ENCODE measurements at regions of chr2 and their contacts with region 1.

Region 1: GRCh38 chr2:10072656-10073480 is 7.3 kb downstream of the CYS1 start:
- DNase-seq: peak; percentile 59 to 89 (median 80)
- ATAC-seq: peak; percentile 97
- H3K4me3 ChIP-seq: no peak overlapping the region
- H3K4me3 Mint-ChIP-seq: no peak overlapping the region
- H3K27ac ChIP-seq: no peak overlapping the region
- H3K27ac Mint-ChIP-seq: no peak overlapping the region
- H3K4me1 ChIP-seq: no peaks in the 10 kb centered on the region
- H3K4me1 Mint-ChIP-seq: peaks cover 4% of the 10 kb centered on the region
- H3K27me3 ChIP-seq: peaks cover 4 to 11% of the 10 kb centered on the region in 2 experiments
- H3K27me3 Mint-ChIP-seq: peaks cover 35% of the 10 kb centered on the region
- CTCF ChIP-seq: peak; percentile 70

Region 2: GRCh38 chr2:10091182-10091888 is 18.5 kb after region 1 on chr2:
- CTCF ChIA-PET with region 1: interaction called, 89 read pairs
- POLR2A ChIA-PET with region 1: no interaction called
- intact Hi-C with region 1: no loop called
- DNase-seq: peak in 3 of 9 experiments; percentile 35 to 52 (median 36)
- ATAC-seq: peak; percentile 23
- H3K4me3 ChIP-seq: peak overlapping the region in 1 of 2 experiments; percentile 45
- H3K4me3 Mint-ChIP-seq: peak overlapping the region; percentile 73
- H3K27ac ChIP-seq: no peak overlapping the region
- H3K27ac Mint-ChIP-seq: no peak overlapping the region
- H3K4me1 ChIP-seq: peaks cover 3% of the 10 kb centered on the region
- H3K4me1 Mint-ChIP-seq: peaks cover 5% of the 10 kb centered on the region
- H3K27me3 ChIP-seq: peaks cover 7 to 18% of the 10 kb centered on the region in 2 experiments
- H3K27me3 Mint-ChIP-seq: peaks cover 71% of the 10 kb centered on the region
- CTCF ChIP-seq: no peak

Region 3: GRCh38 chr2:10103179-10103732 is 30.4 kb after region 1 on chr2:
- CTCF ChIA-PET with region 1: interaction called, 89 read pairs
- POLR2A ChIA-PET with region 1: no interaction called
- intact Hi-C with region 1: no loop called
- DNase-seq: no peak
- ATAC-seq: no peak
- H3K4me3 ChIP-seq: no peak overlapping the region
- H3K4me3 Mint-ChIP-seq: no peak overlapping the region
- H3K27ac ChIP-seq: no peak overlapping the region
- H3K27ac Mint-ChIP-seq: no peak overlapping the region
- H3K4me1 ChIP-seq: no peaks in the 10 kb centered on the region
- H3K4me1 Mint-ChIP-seq: no peaks in the 10 kb centered on the region
- H3K27me3 ChIP-seq: no peaks in the 10 kb centered on the region
- H3K27me3 Mint-ChIP-seq: no peaks in the 10 kb centered on the region
- CTCF ChIP-seq: no peak

Region 4: DNA sequence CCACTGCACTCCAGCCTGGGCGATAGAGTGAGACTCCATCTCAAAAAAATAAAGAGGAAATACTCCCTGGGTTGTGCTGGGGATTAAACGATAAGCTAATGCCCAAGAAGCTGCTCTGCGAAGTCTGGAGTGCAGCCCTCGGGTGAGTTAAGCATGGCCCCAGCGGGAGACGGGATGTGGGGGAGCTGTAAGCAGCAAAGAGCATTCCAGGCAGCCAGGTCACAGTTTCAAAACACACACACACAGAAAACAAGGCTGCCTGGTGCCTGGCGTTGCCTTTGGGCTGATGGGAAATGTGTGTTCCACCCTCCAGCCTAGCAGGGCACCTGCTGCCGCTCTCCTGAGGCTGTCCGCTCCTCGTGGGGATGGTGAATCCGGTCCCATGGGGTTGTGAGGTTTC is 351.2 kb after region 1 on chr2:
- CTCF ChIA-PET with region 1: interaction called, 10 read pairs
- POLR2A ChIA-PET with region 1: no interaction called
- intact Hi-C with region 1: no loop called
- DNase-seq: no peak
- ATAC-seq: no peak
- H3K4me3 ChIP-seq: no peak overlapping the region
- H3K4me3 Mint-ChIP-seq: no peak overlapping the region
- H3K27ac ChIP-seq: no peak overlapping the region
- H3K27ac Mint-ChIP-seq: no peak overlapping the region
- H3K4me1 ChIP-seq: no peaks in the 10 kb centered on the region
- H3K4me1 Mint-ChIP-seq: no peaks in the 10 kb centered on the region
- H3K27me3 ChIP-seq: no peaks in the 10 kb centered on the region
- H3K27me3 Mint-ChIP-seq: no peaks in the 10 kb centered on the region
- CTCF ChIP-seq: no peak

Region 5: GRCh38 chr2:10668402-10669012 is 595.6 kb after region 1 on chr2:
- CTCF ChIA-PET with region 1: interaction called, 7 read pairs
- POLR2A ChIA-PET with region 1: no interaction called
- intact Hi-C with region 1: loop called (anchors 1 kb)
- DNase-seq: peak in 3 of 9 experiments; percentile 39 to 78 (median 74)
- ATAC-seq: peak; percentile 77
- H3K4me3 ChIP-seq: no peak overlapping the region
- H3K4me3 Mint-ChIP-seq: no peak overlapping the region
- H3K27ac ChIP-seq: no peak overlapping the region
- H3K27ac Mint-ChIP-seq: no peak overlapping the region
- H3K4me1 ChIP-seq: no peaks in the 10 kb centered on the region
- H3K4me1 Mint-ChIP-seq: peaks cover 2% of the 10 kb centered on the region
- H3K27me3 ChIP-seq: no peaks in the 10 kb centered on the region
- H3K27me3 Mint-ChIP-seq: no peaks in the 10 kb centered on the region
- CTCF ChIP-seq: peak; percentile 86

Measured in CD8-positive, alpha-beta T cell (primary cell).